Panc1 (cell line): ENCODE measurements at regions of chr7 and their contacts with region 1.

Region 1: DNA sequence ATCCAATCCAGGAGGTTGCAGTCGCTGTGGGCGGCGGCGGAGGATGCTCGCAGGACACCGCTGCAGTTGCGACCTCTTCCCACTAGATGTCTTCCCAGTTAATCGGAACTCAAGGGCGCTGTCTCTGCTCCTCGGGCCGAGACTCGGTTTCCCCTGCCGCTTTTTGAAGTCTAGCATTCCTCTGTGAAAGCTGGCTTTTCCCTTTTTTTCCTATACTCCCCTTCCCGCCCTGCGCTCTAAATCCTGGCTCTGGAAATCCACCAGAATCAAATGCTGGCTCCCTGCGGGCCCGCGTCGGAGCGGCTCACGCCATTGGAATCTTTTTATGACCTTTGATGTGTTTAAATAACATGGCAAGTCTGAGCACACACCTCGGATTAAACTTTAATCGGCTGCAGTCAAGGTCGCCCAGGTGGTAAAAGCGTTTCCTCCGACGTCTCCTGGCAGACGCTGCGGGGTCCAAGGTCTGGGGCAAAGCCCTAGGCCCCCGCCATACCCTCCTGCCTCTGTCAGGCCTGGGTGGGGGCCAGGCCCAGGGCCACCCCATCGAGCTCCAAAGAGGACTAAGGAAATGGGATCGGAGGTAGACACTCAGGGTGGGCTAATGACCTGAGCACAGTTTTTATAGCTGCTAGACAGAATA is 10.7 kb upstream of the HOXA13 start:
- DNase-seq: no peak
- ATAC-seq: peak; percentile 92
- H3K4me3 ChIP-seq: peak overlapping the region; percentile 37 to 65
- H3K27ac ChIP-seq: peak overlapping the region; percentile 46
- H3K4me1 ChIP-seq: peaks cover 6% of the 10 kb centered on the region
- H3K27me3 ChIP-seq: no peaks in the 10 kb centered on the region; the same call in 1 of the 2 replicates
- CTCF ChIP-seq: peak; percentile 96

Region 2: GRCh38 chr7:25389489-25390106 is 1821.0 kb before region 1 on chr7:
- CTCF ChIA-PET with region 1: no interaction called
- POLR2A ChIA-PET with region 1: no interaction called
- in situ Hi-C with region 1: no loop called
- intact Hi-C with region 1: no loop called
- DNase-seq: no peak
- ATAC-seq: peak; percentile 74
- H3K4me3 ChIP-seq: no peak overlapping the region
- H3K27ac ChIP-seq: no peak overlapping the region
- H3K4me1 ChIP-seq: no peaks in the 10 kb centered on the region
- H3K27me3 ChIP-seq: peaks cover 8% of the 10 kb centered on the region
- CTCF ChIP-seq: peak; percentile 76

Region 3: DNA sequence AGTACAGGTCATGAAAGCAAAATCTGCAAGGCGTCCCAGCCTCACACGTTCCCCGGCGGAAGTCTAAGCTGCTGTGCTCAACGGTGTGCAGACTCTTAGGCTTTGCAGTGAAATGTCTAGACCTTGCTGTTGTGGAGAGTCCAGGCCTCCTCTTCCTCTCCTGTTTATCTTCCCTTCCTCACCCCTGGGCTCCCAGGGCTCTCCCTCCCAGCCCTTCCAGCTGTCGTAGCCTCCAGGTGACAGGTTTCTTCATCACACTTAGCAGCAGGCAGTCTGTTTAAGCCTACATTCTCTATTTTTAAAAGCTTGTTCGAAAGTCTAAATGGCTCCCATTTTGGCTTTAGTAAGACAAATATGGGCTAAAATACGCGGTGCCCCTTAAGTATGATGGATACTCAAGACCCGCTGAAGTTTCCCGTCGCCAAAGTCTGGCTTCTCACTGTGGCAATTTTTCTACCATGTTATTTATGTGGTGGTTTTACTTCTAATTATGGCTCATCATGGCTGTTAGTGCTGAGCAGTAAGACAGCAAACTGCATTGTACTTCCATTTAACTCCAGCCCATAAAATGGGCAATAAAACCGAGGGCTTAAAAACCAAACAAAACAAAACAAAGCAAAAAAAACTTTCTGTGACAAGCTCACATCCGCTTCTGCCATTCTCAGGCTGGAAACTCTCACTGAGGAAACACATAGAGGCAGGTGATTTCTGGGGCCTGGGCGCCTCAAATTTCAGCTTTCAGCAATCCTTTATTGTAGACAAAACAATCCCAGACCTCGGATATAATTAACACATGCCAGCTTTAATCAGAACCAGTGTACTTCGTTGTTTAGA is 675.7 kb before region 1 on chr7:
- CTCF ChIA-PET with region 1: no interaction called
- POLR2A ChIA-PET with region 1: no interaction called
- in situ Hi-C with region 1: no loop called
- intact Hi-C with region 1: no loop called
- DNase-seq: no peak
- ATAC-seq: no peak
- H3K4me3 ChIP-seq: no peak overlapping the region
- H3K27ac ChIP-seq: no peak overlapping the region
- H3K4me1 ChIP-seq: 0 out of 2 replicates have a peak, but pooled peaks cover 5% of the 10 kb centered on the region
- H3K27me3 ChIP-seq: peaks cover 51% of the 10 kb centered on the region
- CTCF ChIP-seq: no peak

Region 4: DNA sequence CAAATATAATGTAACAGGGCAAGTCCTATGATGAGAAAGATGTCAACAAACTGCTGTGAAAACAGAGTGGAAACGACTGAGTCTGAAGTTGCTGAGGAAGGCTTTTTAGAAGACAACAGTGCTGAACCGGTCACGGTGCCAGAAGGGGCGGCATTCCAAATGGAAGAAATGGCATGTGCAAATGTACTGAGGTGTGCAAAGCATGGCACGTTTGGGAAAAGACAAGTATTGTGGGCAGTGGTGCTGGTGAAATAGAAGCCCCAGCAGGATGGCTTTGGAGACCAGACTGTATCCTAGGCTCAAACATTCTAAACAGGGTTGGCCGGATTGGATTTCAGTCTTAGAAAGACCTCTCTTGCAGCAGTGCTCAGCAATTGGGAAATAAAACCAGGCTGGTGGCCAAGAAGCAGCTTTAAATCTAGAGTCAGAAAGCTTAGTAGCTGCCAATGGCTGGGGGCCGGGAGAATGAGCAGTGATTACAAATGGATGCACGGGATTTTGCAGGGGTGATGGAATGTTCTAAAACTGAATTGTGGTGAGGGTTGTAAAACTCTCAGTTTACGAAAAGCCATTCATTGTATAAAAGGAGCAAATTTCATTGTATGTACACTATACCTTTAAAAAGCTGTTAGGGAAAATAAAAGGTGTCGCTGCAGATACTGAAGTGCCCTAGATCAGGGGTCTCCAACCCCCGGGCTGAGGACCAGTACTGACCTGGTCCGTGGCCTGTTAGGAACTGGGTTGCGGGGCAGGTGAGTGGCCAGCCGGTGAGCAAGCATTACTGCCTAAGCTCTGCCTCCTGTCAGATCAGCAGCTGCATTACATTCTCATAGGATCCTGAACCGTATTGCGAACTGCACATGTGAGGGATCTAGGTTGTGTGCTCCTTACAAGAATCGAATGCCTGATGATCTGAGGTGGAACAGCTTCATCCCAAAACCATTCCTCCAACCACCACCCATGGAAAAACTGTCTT is 310.5 kb after region 1 on chr7:
- CTCF ChIA-PET with region 1: no interaction called
- POLR2A ChIA-PET with region 1: interaction called, 17 read pairs
- in situ Hi-C with region 1: no loop called
- intact Hi-C with region 1: no loop called
- DNase-seq: no peak
- ATAC-seq: no peak
- H3K4me3 ChIP-seq: no peak overlapping the region
- H3K27ac ChIP-seq: no peak overlapping the region
- H3K4me1 ChIP-seq: no peaks in the 10 kb centered on the region
- H3K27me3 ChIP-seq: no peaks in the 10 kb centered on the region
- CTCF ChIP-seq: no peak